Activated B cell treated with CpG ODN at 0.5 μM for 24 hours (primary cell): ENCODE measurements at regions of chr7 and their contacts with region 1.

Region 1: GRCh38 chr7:50335795-50336754 is 31.6 kb downstream of the IKZF1 start:
- DNase-seq: peak; percentile 69
- ATAC-seq: peak; percentile 63
- H3K4me3 Mint-ChIP-seq: peak overlapping the region; percentile 74
- H3K27ac Mint-ChIP-seq: no peak overlapping the region
- H3K4me1 Mint-ChIP-seq: peaks cover 2% of the 10 kb centered on the region
- H3K27me3 Mint-ChIP-seq: no peaks in the 10 kb centered on the region
- CTCF ChIP-seq: no peak

Region 2: DNA sequence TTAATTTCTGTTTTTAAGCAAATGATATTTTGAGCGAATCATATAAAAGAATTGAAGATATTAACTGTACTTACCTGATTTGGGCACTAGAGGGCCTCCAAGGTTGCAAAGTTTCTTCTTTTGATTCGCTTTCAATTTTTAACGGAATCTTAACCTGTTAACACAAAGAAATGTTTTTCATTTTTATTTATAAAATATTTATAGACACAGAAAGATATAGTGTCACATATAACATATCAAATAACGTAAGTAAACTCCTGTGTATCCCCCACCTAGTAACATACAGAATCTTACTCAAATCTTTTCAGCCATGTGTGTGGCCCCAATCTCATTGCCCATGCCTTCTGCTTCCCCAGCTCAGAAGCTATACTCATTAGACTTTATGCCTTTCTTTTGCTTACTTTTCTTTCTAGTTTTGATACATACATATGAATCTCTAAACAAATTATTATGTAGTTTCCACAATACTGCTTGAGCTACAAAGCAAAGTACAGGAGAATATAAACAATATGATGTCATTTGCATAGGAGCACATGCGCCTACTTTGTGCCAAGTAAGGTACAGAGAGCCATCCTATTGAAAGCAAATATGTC is 193.6 kb before region 1 on chr7:
- CTCF ChIA-PET with region 1: interaction called, 3 read pairs
- POLR2A ChIA-PET with region 1: interaction called, 3 read pairs
- intact Hi-C with region 1: loop called (anchors 10 kb)
- DNase-seq: no peak
- ATAC-seq: peak; percentile 62
- H3K4me3 Mint-ChIP-seq: peak overlapping the region; percentile 72
- H3K27ac Mint-ChIP-seq: peak overlapping the region; percentile 86
- H3K4me1 Mint-ChIP-seq: peaks cover 58% of the 10 kb centered on the region
- H3K27me3 Mint-ChIP-seq: no peaks in the 10 kb centered on the region
- CTCF ChIP-seq: no peak

Region 3: DNA sequence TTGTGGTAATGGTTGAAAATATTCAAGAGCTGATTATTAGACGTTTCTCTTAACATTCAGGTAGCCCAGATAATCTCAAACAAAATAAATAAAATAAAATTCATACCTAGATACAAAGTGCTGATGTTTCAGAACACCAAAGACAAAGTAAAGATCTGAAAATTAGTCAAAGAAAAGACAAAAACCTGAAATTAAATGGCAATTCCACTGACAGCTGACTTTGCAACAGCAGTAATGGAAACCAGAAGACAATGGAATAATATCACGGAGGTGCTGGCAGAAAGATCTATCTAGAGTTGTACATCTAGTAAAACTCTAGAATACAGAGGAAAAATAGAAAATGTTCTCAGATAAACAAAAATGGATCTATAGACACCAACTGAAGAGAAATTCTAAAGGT is 89.5 kb before region 1 on chr7:
- CTCF ChIA-PET with region 1: no interaction called
- POLR2A ChIA-PET with region 1: no interaction called
- intact Hi-C with region 1: no loop called
- DNase-seq: no peak
- ATAC-seq: no peak
- H3K4me3 Mint-ChIP-seq: no peak overlapping the region
- H3K27ac Mint-ChIP-seq: no peak overlapping the region
- H3K4me1 Mint-ChIP-seq: peaks cover 5% of the 10 kb centered on the region
- H3K27me3 Mint-ChIP-seq: no peaks in the 10 kb centered on the region
- CTCF ChIP-seq: no peak

Region 4: DNA sequence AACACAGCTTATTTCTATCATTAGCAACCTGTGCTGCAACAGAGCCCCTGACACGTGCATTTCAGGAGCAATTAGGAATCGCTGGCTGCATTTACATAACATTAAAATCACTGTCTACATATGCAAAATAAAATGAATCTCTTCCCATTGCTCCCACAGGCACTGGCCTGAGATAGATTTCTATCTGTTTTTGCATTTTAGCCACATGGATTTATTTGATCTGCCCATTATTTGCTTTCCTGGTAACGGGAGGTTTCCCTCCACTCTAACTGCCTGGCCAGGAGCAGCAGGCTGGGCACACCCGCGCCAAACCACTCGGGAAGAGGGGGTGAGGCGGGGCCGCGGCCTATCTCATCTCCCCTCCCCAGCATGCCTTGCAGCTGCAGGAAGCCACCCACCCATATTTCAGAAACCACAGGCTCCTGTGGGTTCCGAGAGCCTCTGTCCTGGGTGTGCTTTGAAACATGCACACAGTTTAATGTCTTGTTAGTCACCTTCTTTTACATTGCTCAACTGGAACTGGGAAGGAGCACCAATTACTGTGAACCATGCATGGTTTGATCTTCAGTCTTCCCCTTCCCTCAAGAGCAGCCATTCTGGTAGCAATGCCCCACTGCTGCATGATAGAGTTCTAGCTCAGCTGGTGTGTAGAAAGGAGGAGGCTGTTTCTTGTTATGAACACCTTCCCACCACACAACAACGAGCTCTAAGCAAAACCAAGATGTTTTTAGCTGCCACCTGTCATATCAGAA is 69.3 kb before region 1 on chr7:
- CTCF ChIA-PET with region 1: interaction called, 3 read pairs
- POLR2A ChIA-PET with region 1: interaction called, 10 read pairs
- intact Hi-C with region 1: no loop called
- DNase-seq: no peak
- ATAC-seq: peak; percentile 66
- H3K4me3 Mint-ChIP-seq: peak overlapping the region; percentile 78
- H3K27ac Mint-ChIP-seq: peak overlapping the region; percentile 87
- H3K4me1 Mint-ChIP-seq: peaks cover 99% of the 10 kb centered on the region
- H3K27me3 Mint-ChIP-seq: no peaks in the 10 kb centered on the region
- CTCF ChIP-seq: no peak

Region 5: DNA sequence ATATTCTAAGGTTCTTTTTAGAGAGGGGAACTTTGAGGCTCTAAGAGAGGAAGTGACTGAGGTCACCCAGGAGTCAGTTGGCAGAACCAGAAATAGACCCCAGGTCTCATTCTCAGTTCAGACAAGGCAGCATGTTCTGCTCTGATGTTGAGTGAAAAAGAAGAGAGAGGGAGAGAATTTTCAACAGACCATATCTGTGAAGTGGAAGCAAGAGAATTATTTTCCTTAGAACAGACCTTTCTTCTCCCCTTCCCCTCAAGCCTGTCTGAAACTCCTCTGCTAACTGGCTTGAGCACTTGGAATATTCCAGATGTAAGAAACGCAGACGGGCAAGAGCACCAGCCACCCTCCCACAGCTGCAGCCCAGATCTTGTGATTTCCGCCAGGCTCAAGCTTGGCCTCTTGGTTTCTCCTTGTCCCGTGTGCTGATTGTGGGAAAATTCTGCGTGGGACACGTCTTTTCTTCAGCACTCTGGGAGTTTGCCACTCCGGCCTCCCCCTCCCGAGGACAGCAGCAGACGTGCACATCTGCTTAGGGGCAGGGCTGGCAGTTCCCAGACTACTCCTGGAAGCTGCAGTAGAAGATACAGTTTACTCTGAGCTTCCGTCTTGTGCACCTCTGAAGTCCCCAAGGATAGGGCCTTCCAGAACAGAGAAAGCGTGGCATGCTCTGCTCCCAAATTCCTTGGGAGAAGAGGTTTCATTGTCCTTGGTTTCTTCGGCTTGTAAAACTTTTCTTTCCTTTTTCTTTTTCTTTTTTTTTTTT is 54.2 kb before region 1 on chr7:
- CTCF ChIA-PET with region 1: no interaction called
- POLR2A ChIA-PET with region 1: interaction called, 16 read pairs
- intact Hi-C with region 1: no loop called
- DNase-seq: no peak
- ATAC-seq: peak; percentile 89
- H3K4me3 Mint-ChIP-seq: peak overlapping the region; percentile 84
- H3K27ac Mint-ChIP-seq: peak overlapping the region; percentile 94
- H3K4me1 Mint-ChIP-seq: peaks cover 83% of the 10 kb centered on the region
- H3K27me3 Mint-ChIP-seq: no peaks in the 10 kb centered on the region
- CTCF ChIP-seq: no peak

Region 6: GRCh38 chr7:50349963-50350944 is 14.2 kb after region 1 on chr7:
- CTCF ChIA-PET with region 1: interaction called, 6 read pairs
- POLR2A ChIA-PET with region 1: interaction called, 99 read pairs
- intact Hi-C with region 1: loop called (anchors 1 kb)
- DNase-seq: no peak
- ATAC-seq: peak; percentile 76
- H3K4me3 Mint-ChIP-seq: peak overlapping the region; percentile 42
- H3K27ac Mint-ChIP-seq: peak overlapping the region; percentile 88
- H3K4me1 Mint-ChIP-seq: peaks cover 95% of the 10 kb centered on the region
- H3K27me3 Mint-ChIP-seq: no peaks in the 10 kb centered on the region
- CTCF ChIP-seq: no peak

Region 7: DNA sequence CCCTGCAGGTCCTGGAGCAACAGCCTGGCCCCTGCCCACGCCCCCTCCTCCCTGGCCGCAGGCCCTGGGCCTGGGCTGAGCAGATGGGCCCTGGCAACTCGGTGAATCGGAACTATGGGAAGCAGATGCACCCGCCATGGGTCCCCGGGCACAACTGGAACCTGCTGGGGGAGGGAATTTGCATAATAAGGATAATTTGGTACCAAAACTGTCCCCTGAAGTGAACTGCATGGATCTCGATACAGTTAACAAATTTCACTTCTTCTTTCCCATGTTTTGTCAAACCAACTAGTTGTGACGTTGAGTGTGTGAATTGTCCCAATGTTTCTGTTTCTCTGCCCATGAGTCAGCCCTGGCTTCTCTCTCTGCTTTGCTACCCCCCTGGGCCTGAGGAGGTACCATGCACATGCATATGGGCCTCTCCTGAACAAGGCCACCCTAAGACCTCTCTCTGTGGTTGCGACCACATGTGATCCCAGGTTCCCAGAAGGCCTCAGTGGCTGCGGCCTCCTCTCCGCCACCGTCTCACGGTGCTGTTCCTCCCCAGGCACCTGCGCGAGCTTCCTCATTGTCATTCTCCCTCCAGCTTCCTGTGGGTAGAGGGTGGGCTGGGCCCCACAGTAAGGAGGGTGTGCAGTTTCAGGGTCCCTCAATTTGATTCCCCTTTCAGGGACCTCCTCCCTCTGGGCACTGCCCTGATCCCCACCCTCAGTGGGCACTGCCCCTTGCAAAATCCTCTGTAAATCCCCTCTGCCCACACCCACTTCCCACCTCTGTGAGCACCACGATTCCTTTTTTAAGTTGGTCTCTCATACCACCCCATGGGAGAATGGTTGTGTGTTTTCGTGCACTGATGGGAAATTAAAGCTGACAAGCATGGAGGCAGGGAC is 74.0 kb after region 1 on chr7:
- CTCF ChIA-PET with region 1: no interaction called
- POLR2A ChIA-PET with region 1: interaction called, 11 read pairs
- intact Hi-C with region 1: no loop called
- DNase-seq: peak; percentile 58
- ATAC-seq: peak; percentile 70
- H3K4me3 Mint-ChIP-seq: peak overlapping the region; percentile 56
- H3K27ac Mint-ChIP-seq: peak overlapping the region; percentile 94
- H3K4me1 Mint-ChIP-seq: peaks cover 98% of the 10 kb centered on the region
- H3K27me3 Mint-ChIP-seq: no peaks in the 10 kb centered on the region
- CTCF ChIP-seq: no peak